ENCODE measurements at regions of chr16 and their contacts with region 1.

Region 1: DNA sequence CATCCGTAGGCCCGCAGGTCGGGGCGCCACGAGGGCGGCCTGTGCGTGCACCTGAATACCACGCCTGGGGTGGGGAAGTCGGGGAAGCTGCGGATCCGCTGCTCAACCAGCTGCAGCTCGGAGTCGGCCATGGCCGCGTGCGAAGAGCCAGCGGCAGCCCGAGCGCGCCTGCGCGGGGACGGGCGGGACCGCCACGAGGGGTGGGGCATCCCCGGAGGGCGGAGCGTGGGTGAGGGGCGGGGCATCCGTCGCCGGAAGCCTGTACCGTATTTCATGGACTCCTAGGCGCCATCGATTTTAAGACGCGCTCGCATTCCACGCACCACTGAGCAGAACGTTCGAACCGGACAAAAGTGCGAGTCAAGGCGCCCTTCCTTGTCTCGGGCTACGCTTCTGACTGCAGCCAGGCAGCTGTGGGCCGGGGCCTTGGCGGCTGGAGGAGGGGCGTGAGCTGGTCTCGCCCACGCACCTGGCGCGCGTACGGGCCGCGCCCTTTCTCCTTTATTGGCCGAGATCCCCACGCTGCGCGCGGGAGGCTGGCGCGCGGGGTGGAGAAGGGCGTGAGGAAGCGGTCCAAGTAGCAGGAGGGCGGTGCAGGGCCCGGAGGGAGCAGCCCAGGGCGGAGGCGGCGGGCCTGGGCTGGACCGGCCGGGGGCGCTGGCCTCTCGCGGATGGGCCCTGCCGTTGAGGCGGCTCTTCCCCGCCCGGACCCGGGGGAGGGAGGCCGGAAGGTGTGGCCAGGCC is at the start of gene APRT:
- DNase-seq: peak; percentile 92 to 99
- H3K4me3 ChIP-seq: peak within 1 kb of the TSS; percentile 64
- CTCF ChIP-seq: no peak
- POLR2A ChIP-seq: peak in 1 of 2 donors; percentile 26
- total RNA-seq, gene APRT: 276 to 310 (median 291) TPM

Region 2: DNA sequence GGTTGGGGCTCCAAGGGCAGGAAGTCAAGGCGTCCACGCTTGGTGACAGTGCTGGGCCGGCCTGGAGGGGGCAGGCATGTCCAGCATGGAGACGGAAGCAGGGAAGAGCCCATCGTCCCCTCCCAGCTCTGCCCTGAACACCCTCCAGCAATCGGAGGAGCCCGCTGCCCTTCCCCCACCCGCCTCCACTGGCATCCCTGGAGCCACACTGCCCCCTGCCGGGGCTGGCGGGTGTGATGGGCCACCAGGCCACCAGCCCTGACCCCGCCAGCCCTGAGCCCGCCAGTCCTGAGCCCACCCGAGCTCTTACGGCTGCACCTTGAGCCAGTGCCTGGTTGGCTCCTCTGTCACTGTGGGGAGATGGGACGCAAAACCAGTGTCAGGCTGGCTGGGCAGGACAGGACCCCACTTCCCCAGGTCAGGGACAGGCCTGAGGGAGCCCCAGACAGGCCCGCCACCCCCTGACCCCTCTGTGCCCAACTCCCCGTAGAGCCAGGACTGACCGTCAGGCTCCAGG is 355.5 kb after region 1 on chr16:
- intact Hi-C with region 1: loop called (anchors 10 kb)
- DNase-seq: peak; percentile 68 to 95
- H3K4me3 ChIP-seq: no peak overlapping the region
- CTCF ChIP-seq: peak in 1 of 3 donors; percentile 94
- POLR2A ChIP-seq: no peak